B cell (primary cell): ENCODE measurements at regions of chr9 and their contacts with region 1.

Region 1: GRCh38 chr9:86347991-86348390 is 6.2 kb downstream of the TUT7 start:
- DNase-seq: no peak
- ATAC-seq: no peak
- H3K4me3 ChIP-seq: no peak overlapping the region
- H3K4me3 Mint-ChIP-seq: peak overlapping the region; percentile 55
- H3K27ac ChIP-seq: no peak overlapping the region
- H3K27ac Mint-ChIP-seq: no peak overlapping the region
- H3K4me1 ChIP-seq: peaks cover 34 to 52% of the 10 kb centered on the region in 2 donors
- H3K4me1 Mint-ChIP-seq: peaks cover 51% of the 10 kb centered on the region
- H3K27me3 ChIP-seq: no peaks in the 10 kb centered on the region
- H3K27me3 Mint-ChIP-seq: no peaks in the 10 kb centered on the region
- CTCF ChIP-seq: no peak

Region 2: GRCh38 chr9:86298873-86299272 is 49.1 kb before region 1 on chr9:
- CTCF ChIA-PET with region 1: no interaction called
- POLR2A ChIA-PET with region 1: no interaction called
- intact Hi-C with region 1: no loop called
- DNase-seq: no peak
- ATAC-seq: no peak
- H3K4me3 ChIP-seq: no peak overlapping the region
- H3K4me3 Mint-ChIP-seq: no peak overlapping the region
- H3K27ac ChIP-seq: no peak overlapping the region
- H3K27ac Mint-ChIP-seq: no peak overlapping the region
- H3K4me1 ChIP-seq: no peaks in the 10 kb centered on the region
- H3K4me1 Mint-ChIP-seq: no peaks in the 10 kb centered on the region
- H3K27me3 ChIP-seq: no peaks in the 10 kb centered on the region
- H3K27me3 Mint-ChIP-seq: no peaks in the 10 kb centered on the region
- CTCF ChIP-seq: no peak

Region 3: GRCh38 chr9:86337469-86338108 is 10.4 kb before region 1 on chr9:
- CTCF ChIA-PET with region 1: no interaction called
- POLR2A ChIA-PET with region 1: no interaction called
- intact Hi-C with region 1: loop called (anchors 1 kb)
- DNase-seq: peak; percentile 44
- ATAC-seq: peak; percentile 45
- H3K4me3 ChIP-seq: peak overlapping the region in 4 of 5 experiments; percentile 17 to 53 (median 30)
- H3K4me3 Mint-ChIP-seq: peak overlapping the region; percentile 72
- H3K27ac ChIP-seq: peak overlapping the region; percentile 19 to 57
- H3K27ac Mint-ChIP-seq: peak overlapping the region; percentile 12
- H3K4me1 ChIP-seq: peaks cover 18 to 20% of the 10 kb centered on the region in 2 donors
- H3K4me1 Mint-ChIP-seq: peaks cover 40% of the 10 kb centered on the region
- H3K27me3 ChIP-seq: no peaks in the 10 kb centered on the region
- H3K27me3 Mint-ChIP-seq: no peaks in the 10 kb centered on the region
- CTCF ChIP-seq: no peak

Region 4: GRCh38 chr9:86389628-86390027 is 41.6 kb after region 1 on chr9:
- CTCF ChIA-PET with region 1: no interaction called
- POLR2A ChIA-PET with region 1: no interaction called
- intact Hi-C with region 1: no loop called
- DNase-seq: no peak
- ATAC-seq: no peak
- H3K4me3 ChIP-seq: no peak overlapping the region
- H3K4me3 Mint-ChIP-seq: no peak overlapping the region
- H3K27ac ChIP-seq: no peak overlapping the region
- H3K27ac Mint-ChIP-seq: no peak overlapping the region
- H3K4me1 ChIP-seq: no peaks in the 10 kb centered on the region
- H3K4me1 Mint-ChIP-seq: no peaks in the 10 kb centered on the region
- H3K27me3 ChIP-seq: peaks cover 0 to 18% (median 3%) of the 10 kb centered on the region in 4 experiments
- H3K27me3 Mint-ChIP-seq: peaks cover 32% of the 10 kb centered on the region
- CTCF ChIP-seq: no peak